ENCODE measurements at regions of chr17 and their contacts with region 1.

Region 1: GRCh38 chr17:29622337-29623282 is at the start of gene CORO6:
- DNase-seq: no peak
- H3K4me3 ChIP-seq: peak within 1 kb of the TSS; percentile 64 to 79 (median 70)
- H3K27ac ChIP-seq: peak within 1 kb of the TSS; percentile 96
- H3K4me1 ChIP-seq: peaks cover 65% of the 10 kb centered on the region
- H3K27me3 ChIP-seq: no peaks in the 10 kb centered on the region
- CTCF ChIP-seq: no peak
- polyA plus RNA-seq, gene CORO6: 20.5 to 50.9 TPM (median 28.8 TPM) in 3 replicates

Region 2: GRCh38 chr17:29918922-29919856 is 296.6 kb after region 1 on chr17:
- dilution Hi-C with region 1: loop called (anchors 10 kb)
- DNase-seq: peak; percentile 55
- H3K4me3 ChIP-seq: peak overlapping the region in 2 of 3 experiments; percentile 48 to 56
- H3K27ac ChIP-seq: peak overlapping the region; percentile 82
- H3K4me1 ChIP-seq: peaks cover 20% of the 10 kb centered on the region
- H3K27me3 ChIP-seq: no peaks in the 10 kb centered on the region
- CTCF ChIP-seq: no peak

Measured in keratinocyte (primary cell).